ENCODE measurements at regions of chr10 and their contacts with region 1.

Region 1: DNA sequence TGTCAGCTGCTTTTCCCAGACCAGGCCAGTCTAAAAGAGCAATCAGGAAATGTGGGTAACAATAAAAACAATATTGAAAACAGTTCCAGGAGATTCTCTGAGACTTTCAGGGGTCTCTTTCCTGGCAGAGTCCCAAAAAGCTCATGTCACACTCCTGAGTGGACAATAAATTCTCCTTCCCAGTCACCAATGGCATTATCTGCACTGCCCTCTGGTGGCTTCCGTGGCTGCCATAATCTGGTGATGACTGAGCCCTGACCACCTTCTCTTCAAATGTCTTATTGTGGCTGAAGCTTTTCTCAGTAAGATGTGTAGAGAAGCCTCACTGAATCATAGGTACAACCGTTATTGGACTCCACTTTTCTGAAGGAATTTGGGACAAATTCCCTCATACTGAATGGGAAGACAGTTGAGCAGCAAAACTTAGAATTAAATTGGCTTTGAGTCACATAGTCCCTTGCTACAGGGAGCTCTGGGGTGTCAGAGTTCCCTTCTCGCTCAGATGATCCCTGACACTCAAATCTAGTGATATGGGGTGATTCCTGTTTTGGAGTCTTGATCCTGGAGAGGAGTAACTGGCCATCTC is 24.4 kb upstream of the ASAH2 start:
- H3K4me3 ChIP-seq: no peak overlapping the region
- H3K27ac ChIP-seq: no peak overlapping the region
- H3K4me1 ChIP-seq: no peaks in the 10 kb centered on the region
- CTCF ChIP-seq: no peak

Region 2: DNA sequence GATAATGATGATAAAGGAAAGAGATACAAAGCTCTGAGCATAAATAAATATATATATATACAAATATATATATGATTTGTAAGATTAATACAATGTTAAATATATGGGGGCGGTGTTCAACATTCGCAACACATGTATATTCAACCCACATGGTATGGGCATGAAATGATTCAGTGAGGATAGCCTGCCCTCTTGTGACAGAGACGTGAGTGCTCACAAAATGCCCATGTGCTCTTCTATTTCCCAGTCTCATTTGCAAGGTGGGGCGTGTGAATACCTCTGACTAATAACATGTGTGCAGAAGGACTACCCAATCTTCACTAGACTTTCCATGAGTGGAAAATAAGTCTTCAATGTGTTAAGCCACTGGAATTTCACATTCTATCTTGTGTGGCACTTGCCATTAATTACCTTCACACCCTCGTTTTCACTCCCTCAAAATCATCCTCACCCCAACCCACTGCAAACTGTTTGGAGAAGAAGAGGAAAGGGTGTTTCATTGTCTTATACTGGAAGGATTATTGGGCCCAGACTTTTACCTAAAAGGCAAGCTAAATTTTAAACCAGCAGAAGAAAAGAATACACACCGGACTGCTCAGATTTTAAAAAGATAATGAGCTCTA is 51.3 kb before region 1 on chr10:
- CTCF ChIA-PET with region 1: interaction called, 17 read pairs
- POLR2A ChIA-PET with region 1: no interaction called
- H3K4me3 ChIP-seq: no peak overlapping the region
- H3K27ac ChIP-seq: no peak overlapping the region
- H3K4me1 ChIP-seq: no peaks in the 10 kb centered on the region
- CTCF ChIP-seq: peak; percentile 60

Region 3: DNA sequence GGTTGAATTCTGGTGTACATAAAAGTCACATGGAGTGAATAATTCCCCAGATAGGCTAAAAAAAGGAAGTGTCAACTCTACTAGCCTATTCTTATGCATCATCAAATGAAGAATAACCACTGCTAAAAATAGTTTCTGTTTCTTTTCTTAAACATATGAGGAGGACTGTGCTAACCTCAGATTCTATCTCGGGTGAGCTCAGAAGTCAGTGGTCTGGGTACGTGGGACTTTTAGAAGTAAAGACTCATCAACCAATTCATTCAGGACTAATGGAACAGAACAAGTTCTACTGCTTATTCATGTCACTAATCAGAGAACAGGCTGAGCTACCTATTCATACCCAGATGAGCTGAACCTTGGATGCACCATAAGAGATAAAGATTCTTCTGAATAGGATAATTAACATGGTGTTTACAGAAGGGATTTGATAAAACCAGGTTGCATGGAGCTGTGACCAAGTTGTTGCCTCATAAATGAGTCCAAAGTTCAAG is 14.9 kb before region 1 on chr10:
- CTCF ChIA-PET with region 1: interaction called, 12 read pairs
- POLR2A ChIA-PET with region 1: no interaction called
- H3K4me3 ChIP-seq: no peak overlapping the region
- H3K27ac ChIP-seq: no peak overlapping the region
- H3K4me1 ChIP-seq: no peaks in the 10 kb centered on the region
- CTCF ChIP-seq: no peak

Region 4: DNA sequence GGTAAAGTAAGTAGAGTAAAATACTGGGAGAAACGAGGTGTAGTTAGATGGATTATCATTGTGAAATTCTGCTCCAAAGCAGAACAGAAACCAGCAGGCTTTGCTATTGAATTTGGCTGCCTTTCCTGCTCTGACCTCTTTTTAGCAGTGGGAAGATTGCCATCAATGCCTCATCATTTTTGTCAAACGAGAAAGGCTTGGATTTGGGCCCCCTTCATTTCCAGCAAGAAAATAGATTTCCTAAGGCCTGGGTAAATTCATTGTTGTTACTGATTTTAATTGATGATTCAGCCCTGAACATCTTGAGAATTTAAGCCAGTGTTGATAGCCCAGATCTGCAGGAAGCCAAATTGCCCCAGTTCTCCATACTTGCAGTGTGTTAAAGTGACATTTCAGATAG is 10.8 kb after region 1 on chr10:
- CTCF ChIA-PET with region 1: interaction called, 10 read pairs
- POLR2A ChIA-PET with region 1: no interaction called
- H3K4me3 ChIP-seq: no peak overlapping the region
- H3K27ac ChIP-seq: no peak overlapping the region
- H3K4me1 ChIP-seq: no peaks in the 10 kb centered on the region
- CTCF ChIP-seq: no peak

Region 5: GRCh38 chr10:50299948-50300669 is 24.4 kb after region 1 on chr10:
- CTCF ChIA-PET with region 1: no interaction called
- POLR2A ChIA-PET with region 1: no interaction called
- H3K4me3 ChIP-seq: no peak overlapping the region
- H3K27ac ChIP-seq: no peak overlapping the region
- H3K4me1 ChIP-seq: no peaks in the 10 kb centered on the region
- CTCF ChIP-seq: no peak